Breast epithelium (tissue), 4 donors: ENCODE measurements at regions of chr4 and their contacts with region 1.

Region 1: GRCh38 chr4:30630431-30630830 is 89.7 kb upstream of the PCDH7 start:
- DNase-seq: no peak
- H3K4me3 ChIP-seq: no peak overlapping the region
- H3K27ac ChIP-seq: no peak overlapping the region
- H3K4me1 ChIP-seq: no peaks in the 10 kb centered on the region
- H3K27me3 ChIP-seq: no peaks in the 10 kb centered on the region
- CTCF ChIP-seq: no peak
- POLR2A ChIP-seq: no peak

Region 2: DNA sequence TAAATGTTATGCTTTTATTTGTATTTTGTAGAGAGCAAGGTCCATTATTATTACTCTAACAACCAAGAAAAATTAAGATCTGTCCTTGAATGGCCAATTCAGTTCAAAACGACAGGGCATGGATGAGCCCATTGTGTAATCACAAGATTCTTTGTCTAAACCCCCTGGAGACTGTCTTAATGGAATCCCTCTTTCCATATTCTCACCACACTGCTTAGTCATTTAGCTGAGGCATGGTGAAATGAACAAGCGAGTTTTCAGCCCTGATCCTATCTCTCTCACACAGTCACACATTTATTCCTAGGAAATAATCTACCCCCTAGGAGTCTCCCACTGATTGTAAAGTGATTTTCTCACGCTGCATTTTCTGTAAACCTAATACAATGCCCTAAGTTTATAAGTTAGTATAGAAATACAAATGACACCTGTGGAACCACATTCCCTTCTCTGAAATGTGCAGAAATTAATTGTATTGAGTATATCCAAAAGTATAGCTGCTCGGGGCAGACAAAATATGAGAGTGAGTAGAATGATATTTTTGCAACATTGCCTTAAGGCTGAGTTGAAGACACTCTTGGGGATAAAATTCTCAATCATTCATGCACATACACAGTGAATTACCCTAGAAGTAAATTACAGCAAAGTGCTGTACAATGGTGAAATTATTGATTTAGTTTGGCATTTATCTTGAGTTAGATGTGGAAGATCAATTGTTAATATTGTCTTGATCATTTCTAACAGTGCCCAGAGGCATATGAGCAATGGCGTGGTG is 30.0 kb before region 1 on chr4:
- intact Hi-C with region 1: loop called (anchors 2 kb)
- DNase-seq: no peak
- H3K4me3 ChIP-seq: no peak overlapping the region
- H3K27ac ChIP-seq: no peak overlapping the region
- H3K4me1 ChIP-seq: no peaks in the 10 kb centered on the region
- H3K27me3 ChIP-seq: no peaks in the 10 kb centered on the region
- CTCF ChIP-seq: no peak
- POLR2A ChIP-seq: no peak

Region 3: DNA sequence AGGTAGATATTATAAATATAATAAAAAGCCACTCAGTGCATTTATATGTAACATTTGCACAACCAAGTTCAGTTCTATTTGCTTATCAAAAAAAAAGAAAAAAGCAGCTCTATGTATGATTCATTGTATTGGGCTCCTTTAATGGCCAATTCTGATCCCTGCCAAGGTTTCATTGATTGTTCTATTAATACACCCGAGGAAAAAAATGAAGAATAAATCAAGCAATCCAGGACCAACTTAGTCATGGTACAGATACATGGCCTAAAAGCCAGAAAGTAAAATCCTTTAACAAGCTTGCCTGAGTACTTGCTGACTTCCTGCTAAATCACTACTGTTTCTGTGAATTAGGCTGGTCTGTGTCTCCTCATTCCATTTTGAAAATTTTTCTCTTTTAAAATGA is 12.1 kb after region 1 on chr4:
- intact Hi-C with region 1: no loop called
- DNase-seq: no peak
- H3K4me3 ChIP-seq: no peak overlapping the region
- H3K27ac ChIP-seq: no peak overlapping the region
- H3K4me1 ChIP-seq: no peaks in the 10 kb centered on the region
- H3K27me3 ChIP-seq: no peaks in the 10 kb centered on the region
- CTCF ChIP-seq: no peak
- POLR2A ChIP-seq: no peak